ENCODE measurements at regions of chr12 and their contacts with region 1.

Region 1: DNA sequence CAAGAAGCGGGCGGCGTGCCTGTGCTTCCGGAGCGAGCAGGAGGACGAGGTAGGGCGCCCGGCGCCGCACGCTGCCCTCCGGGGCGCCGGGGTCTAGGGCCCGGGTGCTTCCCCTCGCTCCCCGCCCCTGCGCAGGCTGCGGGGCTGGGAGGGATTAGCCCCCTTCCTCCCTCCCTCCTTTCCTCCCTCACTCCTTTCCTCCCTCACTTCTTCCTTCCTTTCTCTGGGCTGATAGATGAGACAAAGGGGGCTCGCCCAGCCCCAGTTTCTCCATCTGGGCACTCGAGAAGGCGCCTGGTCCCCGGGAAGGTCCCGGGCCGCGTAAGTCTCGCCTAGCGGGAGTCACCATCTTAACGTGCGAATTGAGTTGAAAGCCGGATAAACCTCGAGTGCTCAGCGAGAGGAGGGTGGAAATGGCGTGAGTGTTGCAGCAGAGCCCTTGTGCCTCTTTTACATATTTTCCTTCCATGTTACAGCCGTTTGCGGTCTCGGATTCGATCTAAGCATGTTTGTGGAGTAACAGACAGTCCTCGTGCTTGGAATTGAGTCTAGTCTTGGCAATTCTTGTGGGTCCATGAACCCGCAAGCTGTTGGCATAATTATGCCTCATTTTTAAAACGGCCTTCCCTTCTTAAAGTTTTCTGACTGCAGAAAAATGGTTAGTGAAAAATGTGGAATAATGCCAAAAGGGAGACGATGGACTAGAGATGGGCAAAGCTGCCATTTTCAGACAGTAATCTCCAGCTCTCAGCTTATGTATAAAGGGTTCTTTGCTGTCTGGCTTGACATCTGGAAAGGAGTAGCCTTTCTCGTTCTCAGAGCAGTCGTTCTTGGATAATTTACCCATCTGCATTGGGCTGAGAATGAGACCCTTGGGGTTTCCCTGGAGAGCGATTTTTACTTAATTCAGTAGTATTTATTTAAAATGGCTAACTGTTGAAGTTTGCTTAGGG is 924 bp downstream of the NUDT4 start:
- DNase-seq: peak; percentile 80
- H3K4me3 ChIP-seq: peak overlapping the region; percentile 75
- H3K27ac ChIP-seq: peak overlapping the region; percentile 71
- H3K4me1 ChIP-seq: peaks cover 23% of the 10 kb centered on the region
- CTCF ChIP-seq: no peak

Region 2: DNA sequence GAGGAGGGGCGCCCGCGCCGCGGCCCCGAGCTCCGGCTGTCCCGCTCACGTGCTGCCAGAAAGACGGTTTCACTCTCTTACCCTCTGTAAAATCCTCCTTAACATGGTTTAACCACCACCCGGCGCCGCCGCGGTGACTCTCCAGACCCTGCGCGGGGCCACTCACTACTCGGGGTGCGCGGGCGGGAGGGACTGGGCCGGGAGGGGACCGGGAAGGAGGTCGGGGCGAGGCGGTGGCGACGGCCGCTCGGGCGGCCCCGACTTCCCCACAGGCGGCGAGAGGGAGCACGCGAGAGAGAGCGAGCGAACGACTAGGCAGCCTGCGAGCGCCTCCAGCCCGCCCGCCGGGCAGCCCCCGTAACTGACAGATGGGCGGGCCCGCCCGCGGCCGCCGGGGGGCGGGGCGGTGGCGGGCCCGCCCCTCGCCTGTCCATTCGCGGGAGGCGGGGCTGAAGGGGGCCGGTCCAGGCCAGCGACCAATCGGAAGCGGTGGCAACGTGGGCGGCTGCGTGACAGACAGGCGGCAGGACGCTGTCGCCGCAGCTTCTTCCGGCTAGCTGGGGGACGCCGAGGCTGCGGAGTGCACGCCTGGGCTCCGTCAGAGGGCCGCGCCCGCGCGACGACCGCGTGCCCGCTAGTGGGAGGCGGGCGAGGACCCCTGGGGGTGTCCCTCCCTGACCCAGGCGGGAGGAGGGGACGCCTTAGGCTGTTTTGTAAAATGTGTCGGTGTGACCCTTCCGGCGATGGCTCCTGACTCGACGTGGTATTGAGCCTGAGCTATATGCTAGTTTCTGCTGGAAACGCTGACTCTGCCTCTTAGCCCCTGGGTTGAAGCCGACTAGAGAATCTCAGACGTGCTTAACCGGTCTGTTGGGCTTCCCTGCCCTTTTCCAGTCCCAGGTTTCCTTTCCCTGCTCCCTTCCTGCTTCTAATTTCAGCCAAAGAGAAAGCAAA is 449.4 kb before region 1 on chr12 and contains the start of gene EEA1:
- CTCF ChIA-PET with region 1: no interaction called
- POLR2A ChIA-PET with region 1: no interaction called
- intact Hi-C with region 1: loop called (anchors 2 kb)
- DNase-seq: peak; percentile 97
- H3K4me3 ChIP-seq: peak within 1 kb of the TSS; percentile 75
- H3K27ac ChIP-seq: peak within 1 kb of the TSS; percentile 78
- H3K4me1 ChIP-seq: peaks cover 28% of the 10 kb centered on the region
- CTCF ChIP-seq: peak; percentile 40; the same call in 1 of the 2 replicates
- total RNA-seq, gene EEA1: 3.0 and 8.4 TPM in 2 replicates

Region 3: GRCh38 chr12:93098077-93098476 is 280.6 kb before region 1 on chr12:
- CTCF ChIA-PET with region 1: interaction called, 3 read pairs
- POLR2A ChIA-PET with region 1: interaction called, 11 read pairs
- intact Hi-C with region 1: loop called (anchors 1 kb)
- DNase-seq: peak; percentile 87
- H3K4me3 ChIP-seq: no peak overlapping the region
- H3K27ac ChIP-seq: no peak overlapping the region
- H3K4me1 ChIP-seq: peaks cover 7% of the 10 kb centered on the region
- CTCF ChIP-seq: peak; percentile 86

Region 4: GRCh38 chr12:93167841-93168492 is 210.7 kb before region 1 on chr12:
- CTCF ChIA-PET with region 1: no interaction called
- POLR2A ChIA-PET with region 1: no interaction called
- intact Hi-C with region 1: loop called (anchors 1 kb)
- DNase-seq: peak; percentile 58
- H3K4me3 ChIP-seq: peak overlapping the region; percentile 59
- H3K27ac ChIP-seq: peak overlapping the region; percentile 90
- H3K4me1 ChIP-seq: peaks cover 44% of the 10 kb centered on the region
- CTCF ChIP-seq: no peak

Region 5: DNA sequence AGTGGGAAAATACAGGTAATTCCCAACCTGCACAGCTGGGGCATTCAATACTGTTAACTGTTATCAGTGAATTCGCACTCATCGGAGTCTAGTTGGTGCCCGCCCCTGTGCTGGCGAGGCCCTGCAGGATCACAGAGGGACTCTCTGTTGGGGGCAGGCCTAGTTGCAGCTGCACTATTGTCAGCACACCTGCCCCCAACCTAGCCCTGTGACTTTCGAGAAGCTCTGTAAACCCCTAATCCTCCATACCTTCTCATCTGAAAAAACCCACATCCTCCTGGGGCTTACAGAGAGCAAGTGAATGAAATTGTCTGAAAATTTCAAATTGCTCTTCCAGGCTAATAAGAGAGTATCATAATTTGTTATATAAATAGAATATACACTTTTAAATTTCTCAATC is 133.1 kb before region 1 on chr12:
- CTCF ChIA-PET with region 1: no interaction called
- POLR2A ChIA-PET with region 1: no interaction called
- intact Hi-C with region 1: loop called (anchors 5 kb)
- DNase-seq: peak; percentile 83
- H3K4me3 ChIP-seq: no peak overlapping the region
- H3K27ac ChIP-seq: peak overlapping the region; percentile 3
- H3K4me1 ChIP-seq: peaks cover 9% of the 10 kb centered on the region
- CTCF ChIP-seq: no peak

Region 6: DNA sequence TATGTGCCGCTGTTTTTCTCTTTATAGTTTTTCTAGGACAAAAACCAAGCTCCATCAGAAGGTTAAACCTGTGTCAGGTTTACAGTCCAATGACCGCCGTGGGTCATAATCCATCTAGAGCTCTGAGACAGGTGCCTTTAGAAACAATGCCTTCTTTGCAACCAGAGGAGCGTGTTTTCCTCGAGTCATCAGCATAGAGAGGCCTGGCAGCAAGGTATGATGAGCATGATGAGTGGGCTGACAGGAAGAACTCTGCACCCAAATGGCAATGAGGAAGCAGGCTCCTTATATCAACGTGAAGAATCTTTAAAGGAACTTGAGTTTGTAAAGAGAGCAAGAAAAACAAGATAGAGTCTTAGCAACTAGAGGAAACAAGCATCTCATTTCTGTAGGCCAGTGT is 61.4 kb before region 1 on chr12:
- CTCF ChIA-PET with region 1: no interaction called
- POLR2A ChIA-PET with region 1: no interaction called
- intact Hi-C with region 1: no loop called
- DNase-seq: no peak
- H3K4me3 ChIP-seq: no peak overlapping the region
- H3K27ac ChIP-seq: no peak overlapping the region
- H3K4me1 ChIP-seq: no peaks in the 10 kb centered on the region
- CTCF ChIP-seq: no peak

Region 7: DNA sequence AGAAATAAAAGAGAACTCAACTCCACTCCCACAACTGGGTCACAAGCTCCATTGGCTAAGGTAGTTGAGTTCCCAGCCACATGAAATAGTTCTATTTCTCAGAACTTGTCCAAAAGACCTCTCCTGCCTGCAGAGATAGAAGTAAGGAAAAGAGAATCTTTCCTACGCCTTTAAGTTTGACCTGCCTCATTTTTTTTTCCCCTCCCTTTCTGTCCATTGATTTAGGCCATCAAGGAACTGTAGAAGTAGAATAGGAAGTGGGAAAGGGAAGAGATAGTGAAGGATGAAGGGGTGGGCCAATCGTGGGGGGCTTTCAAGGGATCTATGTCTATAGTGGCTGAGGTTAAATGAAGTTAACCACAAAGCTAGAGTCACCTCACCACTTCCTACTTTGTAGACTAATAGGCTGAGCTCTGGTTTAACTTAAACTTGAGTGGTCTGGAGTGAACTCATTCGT is 14.8 kb before region 1 on chr12:
- CTCF ChIA-PET with region 1: no interaction called
- POLR2A ChIA-PET with region 1: interaction called, 12 read pairs
- intact Hi-C with region 1: no loop called
- DNase-seq: no peak
- H3K4me3 ChIP-seq: no peak overlapping the region
- H3K27ac ChIP-seq: no peak overlapping the region
- H3K4me1 ChIP-seq: no peaks in the 10 kb centered on the region
- CTCF ChIP-seq: no peak

Region 8: DNA sequence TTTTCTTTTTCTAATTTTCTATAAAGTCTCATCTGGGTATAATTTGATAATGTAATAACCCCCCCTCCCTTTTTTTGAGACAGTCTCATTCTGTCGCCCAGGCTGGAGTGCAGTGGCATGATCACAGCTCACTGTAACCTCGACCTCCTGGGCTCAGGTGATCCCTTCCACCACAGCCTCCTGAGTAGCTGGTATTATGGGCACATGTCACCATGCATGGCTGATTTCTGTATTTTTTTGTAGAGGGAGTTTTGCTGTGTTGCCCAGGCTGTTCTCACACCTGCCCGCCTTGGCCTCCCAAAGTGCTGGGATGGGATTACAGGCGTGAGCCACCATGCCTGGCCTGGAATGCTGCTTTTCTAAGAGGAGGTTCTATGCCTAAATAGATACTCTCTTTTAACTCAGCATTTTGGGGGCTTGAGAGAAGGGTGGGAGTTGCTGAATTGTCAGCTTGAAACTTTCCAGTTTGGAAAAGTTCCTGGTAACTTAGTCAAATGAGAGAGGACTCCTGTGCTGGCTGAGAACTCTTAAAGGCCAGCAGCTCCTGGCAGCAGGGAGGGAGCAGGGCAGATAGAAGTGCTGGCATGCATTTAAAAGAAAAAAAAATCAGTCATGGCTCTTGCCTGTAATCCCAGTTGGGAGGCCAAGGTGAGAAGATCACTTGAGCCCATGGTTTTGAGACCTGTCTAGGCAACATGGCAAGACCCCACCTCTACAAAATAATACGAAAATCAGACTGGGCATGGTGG is 12.1 kb after region 1 on chr12:
- CTCF ChIA-PET with region 1: interaction called, 6 read pairs
- POLR2A ChIA-PET with region 1: interaction called, 10 read pairs
- intact Hi-C with region 1: no loop called
- DNase-seq: peak; percentile 28
- H3K4me3 ChIP-seq: no peak overlapping the region
- H3K27ac ChIP-seq: no peak overlapping the region
- H3K4me1 ChIP-seq: peaks cover 29% of the 10 kb centered on the region
- CTCF ChIP-seq: no peak

Measured in OCI-LY7 (cell line).